CD4-positive, alpha-beta memory T cell (primary cell): ENCODE measurements at regions of chr17 and their contacts with region 1.

Region 1: DNA sequence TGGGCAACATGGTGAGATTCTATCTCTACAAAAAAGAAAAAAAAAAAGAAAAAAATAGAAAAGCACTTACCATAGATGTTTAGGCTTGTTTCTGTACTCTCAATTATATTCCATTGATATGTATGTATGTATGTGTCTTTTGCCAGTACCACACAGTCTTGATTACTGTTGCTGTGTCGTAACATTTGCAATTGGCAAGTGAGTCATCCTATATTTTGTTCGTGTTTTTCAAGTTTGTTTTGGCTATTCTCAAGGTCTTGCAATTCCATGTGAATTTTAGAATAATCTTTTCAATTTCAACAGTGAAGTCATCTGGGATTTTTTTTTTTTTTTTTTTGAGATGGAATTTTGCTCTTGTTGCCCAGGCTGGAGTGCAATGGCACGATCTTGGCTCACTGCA is 19.3 kb downstream of the SPECC1 start:
- DNase-seq: no peak
- H3K4me3 ChIP-seq: no peak overlapping the region
- H3K4me3 Mint-ChIP-seq: no peak overlapping the region
- H3K27ac ChIP-seq: no peak overlapping the region
- H3K27ac Mint-ChIP-seq: no peak overlapping the region
- H3K4me1 ChIP-seq: no peaks in the 10 kb centered on the region
- H3K4me1 Mint-ChIP-seq: peaks cover 0 to 1% (median 0%) of the 10 kb centered on the region in 4 donors
- H3K27me3 ChIP-seq: no peaks in the 10 kb centered on the region
- H3K27me3 Mint-ChIP-seq: peaks cover 0 to 6% of the 10 kb centered on the region in 2 donors

Region 2: GRCh38 chr17:20073055-20073979 is 44.9 kb after region 1 on chr17:
- CTCF ChIA-PET with region 1: no interaction called
- POLR2A ChIA-PET with region 1: no interaction called
- intact Hi-C with region 1: loop called (anchors 10 kb)
- DNase-seq: peak; percentile 18 to 61 (median 30)
- H3K4me3 ChIP-seq: peak overlapping the region in 1 of 2 donors; percentile 19
- H3K4me3 Mint-ChIP-seq: peak overlapping the region; percentile 72 to 87 (median 79)
- H3K27ac ChIP-seq: peak overlapping the region; percentile 6
- H3K27ac Mint-ChIP-seq: peak overlapping the region; percentile 3 to 86 (median 74)
- H3K4me1 ChIP-seq: peaks cover 27% of the 10 kb centered on the region
- H3K4me1 Mint-ChIP-seq: peaks cover 17 to 30% (median 21%) of the 10 kb centered on the region in 4 donors
- H3K27me3 ChIP-seq: no peaks in the 10 kb centered on the region
- H3K27me3 Mint-ChIP-seq: no peaks in the 10 kb centered on the region